Naive thymus-derived CD4-positive, alpha-beta T cell (primary cell): ENCODE measurements at regions of chr6 and their contacts with region 1.

Region 1: GRCh38 chr6:33711140-33712129 is at the start of gene UQCC2:
- DNase-seq: peak; percentile 94 to 97 (median 97)
- ATAC-seq: peak; percentile 97
- H3K4me3 ChIP-seq: peak within 1 kb of the TSS; percentile 83
- H3K4me3 Mint-ChIP-seq: peak within 1 kb of the TSS; percentile 94 to 99 (median 98)
- H3K27ac ChIP-seq: peak within 1 kb of the TSS; percentile 91
- H3K27ac Mint-ChIP-seq: peak within 1 kb of the TSS; percentile 94 to 98 (median 98)
- H3K4me1 ChIP-seq: peaks cover 9 to 11% of the 10 kb centered on the region in 2 donors
- H3K4me1 Mint-ChIP-seq: peaks cover 22 to 46% (median 36%) of the 10 kb centered on the region in 7 donors
- H3K27me3 ChIP-seq: no peaks in the 10 kb centered on the region
- H3K27me3 Mint-ChIP-seq: peaks cover 0 to 9% (median 0%) of the 10 kb centered on the region in 5 donors
- total RNA-seq, gene UQCC2: 15.7 to 79.8 (median 23.0) TPM

Region 2: DNA sequence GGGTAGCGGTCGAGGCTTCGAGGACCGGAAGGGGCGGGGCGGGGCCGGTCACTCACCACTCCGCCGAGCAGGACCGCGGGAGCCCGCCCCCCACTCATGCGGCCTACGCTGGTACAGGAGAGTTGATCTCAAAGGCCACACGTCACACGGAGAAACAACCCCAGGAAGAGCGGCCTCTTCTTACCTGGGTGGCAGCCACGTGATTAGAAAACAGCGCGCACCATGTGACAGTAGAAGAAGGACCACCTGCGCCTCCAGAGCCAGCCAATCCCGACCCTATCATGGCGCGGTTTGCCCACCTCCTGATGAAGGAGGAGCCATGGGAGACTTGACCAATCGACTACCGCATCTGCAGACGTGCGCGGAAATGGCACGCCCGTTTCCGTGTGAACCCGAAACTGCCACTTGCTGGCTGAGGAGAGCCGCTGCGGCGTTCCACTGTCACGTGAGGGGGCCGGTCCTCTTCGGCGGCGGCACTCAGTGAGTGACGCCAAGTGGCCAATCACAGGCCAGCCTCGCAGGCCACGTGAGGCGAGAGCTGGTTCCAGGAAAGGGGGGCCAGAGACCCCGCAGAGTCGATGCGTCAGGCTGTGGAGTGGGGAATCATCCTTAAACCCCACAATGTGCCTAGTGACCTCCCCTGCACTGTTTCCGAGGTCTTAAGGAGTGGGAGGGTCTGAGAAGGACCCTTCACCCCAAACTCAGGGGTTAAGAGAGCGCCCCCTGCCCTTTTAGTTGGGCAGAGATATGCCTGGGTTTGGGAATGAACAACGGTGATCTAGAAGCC is 293.3 kb before region 1 on chr6 and contains the start of gene CUTA:
- CTCF ChIA-PET with region 1: no interaction called
- POLR2A ChIA-PET with region 1: interaction called, 4 read pairs
- intact Hi-C with region 1: loop called (anchors 1 to 10 kb)
- DNase-seq: peak; percentile 91 to 100 (median 99)
- ATAC-seq: peak; percentile 92
- H3K4me3 ChIP-seq: peak within 1 kb of the TSS; percentile 74
- H3K4me3 Mint-ChIP-seq: peak within 1 kb of the TSS; percentile 88 to 97 (median 94)
- H3K27ac ChIP-seq: peak within 1 kb of the TSS; percentile 94
- H3K27ac Mint-ChIP-seq: peak within 1 kb of the TSS; percentile 98 to 100 (median 99)
- H3K4me1 ChIP-seq: peaks cover 31 to 54% of the 10 kb centered on the region in 2 donors
- H3K4me1 Mint-ChIP-seq: peaks cover 60 to 89% (median 73%) of the 10 kb centered on the region in 7 donors
- H3K27me3 ChIP-seq: no peaks in the 10 kb centered on the region
- H3K27me3 Mint-ChIP-seq: no peaks in the 10 kb centered on the region
- total RNA-seq, gene CUTA: 148 to 235 (median 158) TPM

Region 3: DNA sequence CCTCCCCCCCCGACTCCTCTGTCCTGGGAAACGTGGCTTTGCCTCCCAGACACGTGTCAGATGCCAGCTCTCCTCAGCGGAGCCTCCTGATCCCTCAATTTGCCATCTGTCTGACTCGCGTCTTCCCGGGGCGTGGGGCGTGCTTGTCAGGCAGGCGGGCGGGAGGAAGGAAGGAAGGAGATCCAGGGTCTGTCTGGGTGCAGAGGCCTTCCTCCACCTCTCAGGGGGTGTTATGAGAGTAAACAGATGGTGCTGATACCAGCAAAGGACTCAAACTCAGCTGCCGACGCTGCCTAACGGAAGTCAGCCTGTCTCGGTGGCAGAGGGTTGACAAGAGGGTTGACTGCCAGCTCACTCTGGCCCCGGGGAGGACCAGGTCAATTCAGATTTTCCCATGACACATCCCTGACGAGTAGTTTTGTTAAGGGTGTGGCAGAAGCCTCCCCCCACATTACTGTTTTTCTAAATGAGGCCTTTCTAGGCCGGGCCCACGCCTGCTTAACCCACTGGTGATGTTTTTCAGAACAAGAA is 17.0 kb before region 1 on chr6:
- CTCF ChIA-PET with region 1: interaction called, 7 read pairs
- POLR2A ChIA-PET with region 1: interaction called, 53 read pairs
- intact Hi-C with region 1: loop called (anchors 1 to 2 kb)
- DNase-seq: peak; percentile 28 to 70 (median 64)
- ATAC-seq: peak; percentile 68
- H3K4me3 ChIP-seq: no peak overlapping the region
- H3K4me3 Mint-ChIP-seq: peak overlapping the region; percentile 66 to 86 (median 78)
- H3K27ac ChIP-seq: peak overlapping the region; percentile 80
- H3K27ac Mint-ChIP-seq: peak overlapping the region; percentile 88 to 100 (median 96)
- H3K4me1 ChIP-seq: peaks cover 58 to 74% of the 10 kb centered on the region in 2 donors
- H3K4me1 Mint-ChIP-seq: peaks cover 33 to 85% (median 74%) of the 10 kb centered on the region in 7 donors
- H3K27me3 ChIP-seq: no peaks in the 10 kb centered on the region
- H3K27me3 Mint-ChIP-seq: no peaks in the 10 kb centered on the region

Region 4: DNA sequence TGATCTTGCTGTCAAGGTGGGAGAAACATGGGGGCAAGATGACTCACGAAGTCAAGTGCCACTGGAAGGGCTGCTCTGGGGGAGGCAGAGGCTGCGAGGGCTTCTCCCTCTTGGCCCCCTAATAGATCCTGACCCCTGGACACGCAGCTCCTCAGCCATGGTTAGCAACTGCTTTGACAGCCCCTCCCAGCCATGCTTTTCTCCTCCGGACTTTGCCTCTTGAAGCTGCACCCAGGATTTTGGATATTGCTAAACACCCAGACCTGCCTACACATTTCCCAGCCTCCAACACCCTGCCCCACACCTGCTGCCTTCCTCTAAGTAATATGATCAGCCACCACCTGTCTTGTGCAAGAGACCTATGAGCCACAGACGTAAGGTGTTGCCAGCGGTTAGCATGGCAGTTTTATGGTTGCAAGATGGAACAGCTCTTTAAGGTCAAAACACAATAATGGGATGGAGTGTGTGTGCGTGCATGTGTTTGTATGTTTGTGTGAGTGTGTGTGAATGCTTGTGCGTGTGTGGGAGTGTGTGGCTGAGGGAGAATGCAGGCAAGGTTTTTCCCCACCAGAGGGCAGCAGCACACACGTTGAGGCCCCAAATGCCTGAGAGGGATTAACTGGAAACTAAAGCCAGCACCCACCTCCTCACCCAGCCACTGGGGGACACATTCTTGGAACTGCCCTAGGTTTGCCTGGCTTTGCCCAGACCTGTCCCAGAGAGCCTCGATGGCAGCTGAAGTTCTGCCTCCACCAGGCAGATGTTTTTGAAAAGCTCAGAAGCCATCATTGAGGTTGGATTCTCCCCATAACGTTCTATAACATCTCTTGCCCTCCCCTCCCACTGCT is 32.8 kb after region 1 on chr6:
- CTCF ChIA-PET with region 1: interaction called, 30 read pairs
- POLR2A ChIA-PET with region 1: interaction called, 3 read pairs
- intact Hi-C with region 1: loop called (anchors 1 kb)
- DNase-seq: peak; percentile 47 to 71 (median 65)
- ATAC-seq: peak; percentile 87
- H3K4me3 ChIP-seq: no peak overlapping the region
- H3K4me3 Mint-ChIP-seq: no peak overlapping the region
- H3K27ac ChIP-seq: no peak overlapping the region
- H3K27ac Mint-ChIP-seq: no peak overlapping the region
- H3K4me1 ChIP-seq: no peaks in the 10 kb centered on the region
- H3K4me1 Mint-ChIP-seq: peaks cover 0 to 5% (median 4%) of the 10 kb centered on the region in 7 donors
- H3K27me3 ChIP-seq: no peaks in the 10 kb centered on the region
- H3K27me3 Mint-ChIP-seq: peaks cover 4 to 23% (median 12%) of the 10 kb centered on the region in 5 donors

Region 5: DNA sequence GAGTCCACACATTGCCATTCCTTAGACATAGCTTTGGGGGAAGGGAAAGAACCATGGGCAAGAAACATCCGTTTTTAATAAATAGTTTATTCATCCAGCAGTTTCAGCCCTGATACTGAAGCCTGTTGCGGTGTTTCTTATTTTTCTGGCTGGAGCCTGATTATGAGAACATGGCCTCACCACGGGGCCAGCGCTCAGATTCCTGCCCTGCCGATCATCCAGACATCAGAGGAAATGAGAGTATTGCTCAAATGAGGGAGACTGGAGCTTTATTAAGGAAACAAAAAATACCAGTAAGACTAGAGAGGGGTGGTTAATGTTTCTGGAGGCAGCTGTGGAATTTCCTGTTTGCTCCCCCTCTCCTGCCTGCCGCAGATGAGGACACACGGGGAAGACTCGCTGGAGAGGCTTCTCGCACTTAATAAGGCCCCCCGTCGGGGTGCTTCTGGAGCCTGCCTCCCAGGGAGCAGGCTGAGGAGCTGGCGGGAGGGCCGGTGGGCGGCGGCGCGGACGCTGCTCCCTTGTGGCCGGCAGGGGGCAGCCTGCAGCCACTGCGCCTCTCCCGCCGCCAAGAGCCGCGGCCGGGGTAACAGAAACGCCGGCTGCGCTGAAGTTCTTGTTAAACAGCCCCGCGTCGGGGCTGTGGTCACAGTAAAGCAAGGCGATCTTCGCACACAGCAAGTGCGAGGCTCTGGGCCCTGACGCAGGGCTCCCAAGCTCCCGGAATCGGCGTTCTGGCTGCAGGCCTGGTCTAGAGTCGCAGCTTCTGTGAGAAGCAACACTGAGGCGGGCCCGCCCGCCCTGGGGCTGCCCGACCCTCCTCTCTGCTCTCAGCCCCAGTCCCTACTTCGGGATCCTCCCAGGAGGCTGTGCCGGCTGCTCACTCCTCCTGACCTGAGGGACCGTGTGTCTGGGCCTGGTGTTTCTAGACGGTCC is 60.0 kb after region 1 on chr6:
- CTCF ChIA-PET with region 1: interaction called, 19 read pairs
- POLR2A ChIA-PET with region 1: interaction called, 5 read pairs
- intact Hi-C with region 1: loop called in 1 of 2 experiments (anchors 2 kb)
- DNase-seq: peak; percentile 39 to 72 (median 64)
- ATAC-seq: peak; percentile 85
- H3K4me3 ChIP-seq: no peak overlapping the region
- H3K4me3 Mint-ChIP-seq: no peak overlapping the region
- H3K27ac ChIP-seq: no peak overlapping the region
- H3K27ac Mint-ChIP-seq: peak overlapping the region in 6 of 9 donors; percentile 2 to 89 (median 68)
- H3K4me1 ChIP-seq: no peaks in the 10 kb centered on the region
- H3K4me1 Mint-ChIP-seq: peaks cover 0 to 23% (median 13%) of the 10 kb centered on the region in 7 donors
- H3K27me3 ChIP-seq: no peaks in the 10 kb centered on the region
- H3K27me3 Mint-ChIP-seq: peaks cover 0 to 11% (median 3%) of the 10 kb centered on the region in 5 donors

Region 6: DNA sequence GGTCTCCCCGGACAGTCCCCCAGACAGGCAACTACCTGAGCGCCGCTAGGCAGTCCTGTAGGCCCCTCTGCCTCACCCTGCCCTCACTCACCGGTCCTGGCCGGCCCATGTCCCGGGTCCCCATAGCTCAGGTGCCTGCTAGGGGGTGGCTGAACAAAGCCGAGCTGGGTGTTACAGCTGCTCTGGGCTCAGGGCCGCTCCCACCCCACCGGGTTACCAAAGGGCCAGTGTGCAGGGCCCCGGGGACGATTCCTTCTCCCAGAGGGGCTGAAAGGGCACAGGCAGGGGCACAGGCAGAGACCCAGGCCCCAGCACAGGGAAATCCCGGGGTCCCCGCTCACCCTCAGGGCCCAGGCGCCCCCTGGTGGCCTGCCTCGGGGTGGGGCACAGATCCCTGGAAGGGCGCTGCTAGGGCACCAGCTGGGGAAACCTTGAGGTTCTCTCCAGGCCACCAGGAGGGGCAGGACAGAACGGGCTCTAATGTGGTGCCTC is 316.1 kb after region 1 on chr6:
- CTCF ChIA-PET with region 1: interaction called, 13 read pairs
- POLR2A ChIA-PET with region 1: no interaction called
- intact Hi-C with region 1: loop called in 1 of 2 experiments (anchors 1 kb)
- DNase-seq: peak; percentile 36 to 78 (median 64)
- ATAC-seq: peak; percentile 66
- H3K4me3 ChIP-seq: no peak overlapping the region
- H3K4me3 Mint-ChIP-seq: no peak overlapping the region
- H3K27ac ChIP-seq: no peak overlapping the region
- H3K27ac Mint-ChIP-seq: no peak overlapping the region
- H3K4me1 ChIP-seq: no peaks in the 10 kb centered on the region
- H3K4me1 Mint-ChIP-seq: peaks cover 0 to 4% (median 0%) of the 10 kb centered on the region in 7 donors
- H3K27me3 ChIP-seq: no peaks in the 10 kb centered on the region
- H3K27me3 Mint-ChIP-seq: peaks cover 0 to 4% (median 0%) of the 10 kb centered on the region in 5 donors

Region 7: DNA sequence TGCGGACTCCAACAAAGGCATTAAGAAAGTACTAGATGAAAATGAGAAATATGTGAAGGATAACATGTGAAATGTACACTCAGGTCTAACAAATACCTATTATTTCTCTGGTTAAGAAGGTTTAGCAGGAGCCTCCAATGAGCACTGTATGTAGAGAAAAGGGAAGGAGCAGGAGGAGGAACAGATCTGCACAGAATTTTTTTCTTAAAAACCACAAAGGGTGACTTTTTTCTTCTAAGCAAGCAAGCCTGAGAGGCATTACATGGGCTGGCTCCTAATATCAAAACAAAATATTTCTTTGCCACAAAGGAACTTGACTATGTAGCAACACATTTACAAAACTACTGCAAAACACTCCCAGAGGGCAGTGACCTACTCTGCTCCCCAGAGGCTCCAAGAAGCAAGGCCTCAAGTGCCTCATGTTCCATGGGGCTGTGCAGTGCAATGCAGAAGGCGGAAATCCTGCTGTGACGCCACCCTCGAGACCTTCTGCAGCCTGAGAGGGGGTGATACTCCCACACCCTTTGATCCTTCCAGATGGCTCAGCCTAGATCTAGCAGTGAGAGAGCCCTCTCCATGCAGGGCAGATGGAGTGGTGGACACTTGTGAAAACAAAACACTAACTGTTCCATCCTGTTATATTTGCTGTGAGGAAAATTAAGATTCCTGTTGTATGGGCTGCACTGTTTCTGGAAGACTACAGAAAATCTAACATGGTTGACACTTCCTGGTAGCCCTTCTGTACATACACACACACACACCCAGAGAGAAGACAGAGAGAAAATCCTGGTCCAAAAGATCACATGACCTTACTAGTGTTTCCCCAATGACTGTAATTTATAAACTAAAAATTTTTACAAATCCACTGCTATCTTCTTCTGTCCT is 573.4 kb after region 1 on chr6:
- CTCF ChIA-PET with region 1: no interaction called
- POLR2A ChIA-PET with region 1: no interaction called
- intact Hi-C with region 1: no loop called
- DNase-seq: no peak
- ATAC-seq: peak; percentile 85
- H3K4me3 ChIP-seq: no peak overlapping the region
- H3K4me3 Mint-ChIP-seq: peak overlapping the region in 2 of 10 donors; percentile 34 to 41
- H3K27ac ChIP-seq: no peak overlapping the region
- H3K27ac Mint-ChIP-seq: peak overlapping the region in 5 of 9 donors; percentile 53 to 77 (median 74)
- H3K4me1 ChIP-seq: peaks cover 0 to 3% of the 10 kb centered on the region in 2 donors
- H3K4me1 Mint-ChIP-seq: peaks cover 0 to 31% (median 26%) of the 10 kb centered on the region in 7 donors
- H3K27me3 ChIP-seq: no peaks in the 10 kb centered on the region
- H3K27me3 Mint-ChIP-seq: no peaks in the 10 kb centered on the region

Region 8: GRCh38 chr6:34531580-34532201 is 820.3 kb after region 1 on chr6:
- CTCF ChIA-PET with region 1: no interaction called
- POLR2A ChIA-PET with region 1: no interaction called
- intact Hi-C with region 1: no loop called
- DNase-seq: peak in 4 of 9 donors; percentile 11 to 54 (median 32)
- ATAC-seq: no peak
- H3K4me3 ChIP-seq: no peak overlapping the region
- H3K4me3 Mint-ChIP-seq: peak overlapping the region in 2 of 10 donors; percentile 25 to 42
- H3K27ac ChIP-seq: no peak overlapping the region
- H3K27ac Mint-ChIP-seq: no peak overlapping the region
- H3K4me1 ChIP-seq: peaks cover 1 to 6% of the 10 kb centered on the region in 2 donors
- H3K4me1 Mint-ChIP-seq: peaks cover 0 to 12% (median 7%) of the 10 kb centered on the region in 7 donors
- H3K27me3 ChIP-seq: no peaks in the 10 kb centered on the region
- H3K27me3 Mint-ChIP-seq: peaks cover 0 to 2% (median 0%) of the 10 kb centered on the region in 5 donors